Activated naive CD8-positive, alpha-beta T cell treated with anti-CD3 and anti-CD28 coated beads, Interleukin-2, amount 10 ng/mL, durations not matched to agents 7 days and 5 days (primary cell): ENCODE measurements at regions of chr17 and their contacts with region 1.

Region 1: GRCh38 chr17:59892924-59893676 is at the starts of genes RPS6KB1 and TUBD1:
- DNase-seq: peak; percentile 90
- ATAC-seq: peak; percentile 98
- H3K4me3 Mint-ChIP-seq: peak within 1 kb of the TSS; percentile 100
- H3K27ac Mint-ChIP-seq: peak within 1 kb of the TSS; percentile 100
- H3K4me1 Mint-ChIP-seq: peaks cover 38% of the 10 kb centered on the region
- H3K27me3 Mint-ChIP-seq: no peaks in the 10 kb centered on the region
- total RNA-seq, gene RPS6KB1: 46.3 to 49.4 TPM
- total RNA-seq, gene TUBD1: 16.5 to 21.1 TPM

Region 2: DNA sequence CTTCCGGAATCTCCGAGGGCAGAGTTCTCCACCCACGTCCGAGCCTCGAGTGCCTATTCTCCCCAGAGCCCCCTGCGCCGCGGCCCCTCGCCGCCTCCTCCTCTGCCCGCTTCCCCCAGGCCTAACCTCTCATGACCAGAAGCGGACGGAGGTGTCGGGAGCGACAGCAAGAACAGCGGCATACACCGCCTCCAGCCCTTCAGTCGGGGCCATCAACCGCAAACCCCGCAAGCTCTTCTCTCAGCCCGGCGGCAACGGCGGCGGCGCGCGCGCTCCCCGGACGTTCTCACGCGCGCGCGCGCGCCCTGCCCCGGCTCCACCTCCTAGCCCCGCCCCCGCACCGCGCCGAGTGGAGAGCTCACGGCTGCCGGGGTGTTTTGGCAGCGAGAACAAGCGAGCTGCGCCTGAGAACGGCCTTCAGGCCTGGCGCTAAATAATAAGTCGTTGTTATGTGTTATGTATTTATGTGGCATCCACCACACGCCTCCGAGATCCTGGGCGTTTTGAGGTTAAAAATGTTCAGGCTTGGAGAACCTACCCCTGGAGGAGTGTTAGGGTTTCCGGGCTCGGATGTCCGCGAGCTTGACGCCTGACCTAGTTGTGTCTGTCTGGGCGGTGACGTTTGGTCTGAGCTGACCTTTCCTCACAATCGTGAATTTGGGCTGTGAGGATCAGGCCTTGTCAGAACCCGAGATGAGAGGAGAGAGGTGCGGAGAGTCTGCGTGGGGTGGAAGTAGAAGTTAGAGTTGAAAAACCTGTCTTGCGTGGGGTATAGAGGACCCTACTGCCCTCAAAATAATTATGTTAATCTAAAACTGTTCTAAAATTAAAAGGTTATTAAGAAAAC is 71.6 kb after region 1 on chr17 and contains the start of gene RNFT1:
- POLR2A ChIA-PET with region 1: interaction called, 11 read pairs
- DNase-seq: peak; percentile 97
- ATAC-seq: peak; percentile 90
- H3K4me3 Mint-ChIP-seq: peak within 1 kb of the TSS; percentile 97
- H3K27ac Mint-ChIP-seq: peak within 1 kb of the TSS; percentile 96
- H3K4me1 Mint-ChIP-seq: peaks cover 15% of the 10 kb centered on the region
- H3K27me3 Mint-ChIP-seq: no peaks in the 10 kb centered on the region
- total RNA-seq, gene RNFT1: 23.9 to 25.0 TPM